Heart right ventricle (tissue), 16 donors: ENCODE measurements at regions of chr5 and their contacts with region 1.

Region 1: GRCh38 chr5:139091439-139092156 is 106.6 kb downstream of the SIL1 start:
- DNase-seq: peak in 1 of 2 donors; percentile 42
- ATAC-seq: peak; percentile 76 to 92 (median 90)
- H3K4me3 ChIP-seq: no peak overlapping the region
- H3K27ac ChIP-seq: peak overlapping the region in 1 of 10 donors; percentile 46
- H3K4me1 ChIP-seq: peaks cover 0 to 19% (median 9%) of the 10 kb centered on the region in 9 donors
- H3K27me3 ChIP-seq: no peaks in the 10 kb centered on the region
- CTCF ChIP-seq: peak in 7 of 9 donors; percentile 33 to 66 (median 54)

Region 2: DNA sequence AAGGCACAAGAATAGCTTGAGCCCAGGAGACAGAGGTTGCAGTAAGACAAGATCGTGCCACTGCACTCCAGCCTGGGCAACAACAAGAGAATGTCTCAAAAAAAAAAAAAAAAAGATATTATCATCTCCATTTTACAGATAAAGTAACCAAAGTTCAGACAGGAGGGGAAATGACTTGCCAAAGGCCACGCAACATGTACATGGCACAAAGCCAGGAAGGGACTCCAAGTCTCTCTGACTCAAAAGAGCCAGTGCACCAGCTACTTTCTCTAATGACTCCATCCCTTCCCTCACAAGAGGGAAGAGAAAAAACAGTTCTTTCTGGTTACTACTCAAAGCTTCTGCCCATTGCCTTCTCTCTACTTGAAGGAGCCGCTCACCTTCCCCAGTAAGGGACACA is 72.4 kb after region 1 on chr5:
- intact Hi-C with region 1: no loop called
- DNase-seq: no peak
- ATAC-seq: no peak
- H3K4me3 ChIP-seq: no peak overlapping the region
- H3K27ac ChIP-seq: no peak overlapping the region
- H3K4me1 ChIP-seq: peaks cover 0 to 5% (median 0%) of the 10 kb centered on the region in 9 donors
- H3K27me3 ChIP-seq: no peaks in the 10 kb centered on the region
- CTCF ChIP-seq: no peak

Region 3: DNA sequence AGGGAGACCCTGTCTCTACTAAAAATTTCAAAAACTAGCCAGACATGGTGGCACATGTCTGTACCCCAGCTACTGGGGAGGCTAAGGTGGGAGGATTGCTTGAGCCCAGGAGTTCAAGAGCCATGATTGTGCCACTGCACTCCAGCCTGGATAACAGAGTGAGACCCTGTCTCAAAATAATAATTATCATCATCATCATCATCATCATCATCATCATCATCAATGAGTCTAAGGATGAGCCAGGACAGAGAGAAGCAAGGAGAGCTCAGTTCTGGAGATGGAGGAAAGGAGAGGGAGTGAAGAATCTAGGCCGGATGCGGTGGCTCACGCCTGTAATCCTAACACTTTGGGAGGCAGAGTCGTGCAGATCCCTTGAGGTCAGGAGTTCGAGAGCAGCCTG is 165.2 kb after region 1 on chr5:
- intact Hi-C with region 1: loop called (anchors 2 to 10 kb)
- DNase-seq: no peak
- ATAC-seq: no peak
- H3K4me3 ChIP-seq: no peak overlapping the region
- H3K27ac ChIP-seq: no peak overlapping the region
- H3K4me1 ChIP-seq: peaks cover 0 to 3% (median 0%) of the 10 kb centered on the region in 9 donors
- H3K27me3 ChIP-seq: no peaks in the 10 kb centered on the region
- CTCF ChIP-seq: no peak